ENCODE measurements at regions of chr15 and their contacts with region 1.

Region 1: GRCh38 chr15:92521624-92522008 is 127.9 kb downstream of the ST8SIA2 start:
- DNase-seq: no peak
- H3K4me3 ChIP-seq: no peak overlapping the region
- H3K27ac ChIP-seq: no peak overlapping the region
- H3K4me1 ChIP-seq: no peaks in the 10 kb centered on the region
- H3K27me3 ChIP-seq: no peaks in the 10 kb centered on the region
- CTCF ChIP-seq: peak; percentile 60 to 87 (median 73)
- POLR2A ChIP-seq: no peak

Region 2: GRCh38 chr15:92383519-92384326 is 137.9 kb before region 1 on chr15:
- intact Hi-C with region 1: no loop called
- DNase-seq: no peak
- H3K4me3 ChIP-seq: no peak overlapping the region
- H3K27ac ChIP-seq: no peak overlapping the region
- H3K4me1 ChIP-seq: no peaks in the 10 kb centered on the region
- H3K27me3 ChIP-seq: no peaks in the 10 kb centered on the region
- CTCF ChIP-seq: no peak
- POLR2A ChIP-seq: no peak

Region 3: GRCh38 chr15:92683232-92683834 is 161.7 kb after region 1 on chr15:
- intact Hi-C with region 1: loop called (anchors 10 kb)
- DNase-seq: peak in 1 of 2 donors; percentile 89
- H3K4me3 ChIP-seq: no peak overlapping the region
- H3K27ac ChIP-seq: peak overlapping the region; percentile 40
- H3K4me1 ChIP-seq: peaks cover 15% of the 10 kb centered on the region
- H3K27me3 ChIP-seq: no peaks in the 10 kb centered on the region
- CTCF ChIP-seq: peak in 1 of 3 experiments; percentile 46
- POLR2A ChIP-seq: no peak

Region 4: GRCh38 chr15:92714477-92715401 is 193.1 kb after region 1 on chr15:
- intact Hi-C with region 1: loop called (anchors 5 kb)
- DNase-seq: no peak
- H3K4me3 ChIP-seq: peak overlapping the region; percentile 51 to 55
- H3K27ac ChIP-seq: peak overlapping the region; percentile 83
- H3K4me1 ChIP-seq: peaks cover 8% of the 10 kb centered on the region
- H3K27me3 ChIP-seq: no peaks in the 10 kb centered on the region
- CTCF ChIP-seq: peak; percentile 74 to 94 (median 91)
- POLR2A ChIP-seq: no peak